ENCODE measurements at regions of chr6 and their contacts with region 1.

Region 1: DNA sequence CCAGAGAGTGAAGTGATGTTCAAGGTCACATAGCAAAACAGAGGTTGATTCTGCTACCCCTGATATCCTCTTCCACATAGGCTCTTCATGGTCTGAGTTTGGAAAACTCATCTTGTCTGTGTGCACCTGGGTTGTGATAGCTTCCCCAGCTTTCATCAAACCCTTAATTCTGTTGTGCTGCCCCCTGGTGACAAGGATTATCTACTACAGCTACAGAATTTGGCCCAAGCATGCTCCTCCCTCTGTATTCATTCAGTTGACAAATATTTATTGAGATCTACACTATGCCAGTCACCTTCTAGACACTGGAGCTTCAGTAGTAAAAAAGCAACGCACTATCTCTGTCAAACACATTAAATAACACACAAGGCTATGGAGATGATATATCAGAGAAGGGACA is 50.4 kb downstream of the SMPDL3A start:
- DNase-seq: peak; percentile 72
- H3K4me3 Mint-ChIP-seq: no peak overlapping the region
- H3K27ac Mint-ChIP-seq: no peak overlapping the region
- H3K4me1 Mint-ChIP-seq: no peaks in the 10 kb centered on the region
- H3K27me3 Mint-ChIP-seq: peaks cover 10% of the 10 kb centered on the region

Region 2: GRCh38 chr6:122491919-122492555 is 347.4 kb before region 1 on chr6:
- CTCF ChIA-PET with region 1: interaction called, 3 read pairs
- intact Hi-C with region 1: loop called (anchors 1 kb)
- DNase-seq: peak; percentile 87
- H3K4me3 Mint-ChIP-seq: no peak overlapping the region
- H3K27ac Mint-ChIP-seq: no peak overlapping the region
- H3K4me1 Mint-ChIP-seq: peaks cover 10% of the 10 kb centered on the region
- H3K27me3 Mint-ChIP-seq: no peaks in the 10 kb centered on the region

Region 3: GRCh38 chr6:122609856-122610689 is 229.4 kb before region 1 on chr6 and contains the start of gene PKIB:
- CTCF ChIA-PET with region 1: no interaction called
- intact Hi-C with region 1: loop called (anchors 1 kb)
- DNase-seq: peak; percentile 67
- H3K4me3 Mint-ChIP-seq: peak within 1 kb of the TSS; percentile 77
- H3K27ac Mint-ChIP-seq: no peak within 1 kb of the TSS
- H3K4me1 Mint-ChIP-seq: peaks cover 14% of the 10 kb centered on the region
- H3K27me3 Mint-ChIP-seq: peaks cover 30% of the 10 kb centered on the region
- total RNA-seq, gene PKIB: 0.67 TPM in 1 of 2 experiments, not detected in the other

Region 4: DNA sequence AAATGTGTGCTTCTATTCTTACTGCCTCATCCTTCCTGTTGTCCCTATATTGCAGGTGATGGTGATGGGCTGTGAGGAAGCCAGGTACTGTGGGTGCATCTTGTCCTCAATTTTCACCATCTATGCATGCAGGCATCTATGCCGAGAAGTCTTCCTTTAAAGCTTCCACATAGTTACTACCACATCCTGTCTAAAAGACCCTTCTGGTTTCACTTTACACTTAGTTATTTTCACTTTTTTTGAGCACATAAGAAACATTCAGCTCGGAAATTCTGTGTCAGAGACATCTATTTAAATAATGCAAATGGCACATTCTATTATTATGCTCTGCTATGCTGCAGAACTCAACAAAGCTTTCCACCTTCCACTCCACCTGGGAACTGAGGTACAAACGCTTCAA is 88.2 kb before region 1 on chr6:
- CTCF ChIA-PET with region 1: interaction called, 21 read pairs
- intact Hi-C with region 1: no loop called
- DNase-seq: peak; percentile 18
- H3K4me3 Mint-ChIP-seq: no peak overlapping the region
- H3K27ac Mint-ChIP-seq: peak overlapping the region; percentile 33
- H3K4me1 Mint-ChIP-seq: peaks cover 37% of the 10 kb centered on the region
- H3K27me3 Mint-ChIP-seq: no peaks in the 10 kb centered on the region

Region 5: DNA sequence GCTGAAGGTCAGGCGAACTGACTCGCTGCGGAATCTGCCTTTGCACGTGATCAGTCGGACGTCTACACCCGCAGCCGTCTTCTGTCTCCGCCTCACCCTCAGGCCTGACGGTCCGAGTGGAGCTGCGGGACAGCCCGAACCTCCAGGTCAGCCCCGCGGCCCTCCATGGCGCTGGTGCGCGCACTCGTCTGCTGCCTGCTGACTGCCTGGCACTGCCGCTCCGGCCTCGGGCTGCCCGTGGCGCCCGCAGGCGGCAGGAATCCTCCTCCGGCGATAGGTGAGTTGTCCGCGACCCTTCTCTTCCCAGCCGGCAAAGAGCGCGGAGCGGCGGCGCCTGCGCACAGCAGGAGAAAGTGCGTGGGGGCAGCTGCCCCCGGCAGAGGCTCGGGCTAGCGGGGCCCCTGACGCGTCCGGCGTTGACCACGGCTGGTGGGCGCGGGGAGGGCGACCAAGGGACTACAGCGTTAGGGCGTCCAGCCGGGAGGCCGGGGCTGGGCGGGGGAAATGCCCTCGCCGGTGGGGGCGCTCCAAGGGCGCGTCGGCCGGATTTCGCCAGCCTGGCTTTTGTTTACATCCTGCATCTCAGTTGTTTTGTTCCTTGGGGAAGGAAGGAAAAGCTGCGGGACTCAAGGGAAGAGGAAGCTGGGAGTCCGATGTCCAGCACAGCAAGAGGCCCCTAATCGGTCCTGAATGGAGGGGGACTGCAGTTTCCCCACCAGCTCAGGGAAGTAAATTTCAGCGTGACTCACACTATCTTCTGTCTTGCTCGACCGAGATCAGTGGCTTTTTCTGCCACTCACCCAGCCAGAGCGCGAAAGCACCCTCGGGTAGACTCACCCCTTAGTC is 50.1 kb before region 1 on chr6 and contains the start of gene SMPDL3A:
- CTCF ChIA-PET with region 1: interaction called, 6 read pairs
- intact Hi-C with region 1: loop called (anchors 2 kb)
- DNase-seq: peak; percentile 54
- H3K4me3 Mint-ChIP-seq: peak within 1 kb of the TSS; percentile 85
- H3K27ac Mint-ChIP-seq: no peak within 1 kb of the TSS
- H3K4me1 Mint-ChIP-seq: peaks cover 14% of the 10 kb centered on the region
- H3K27me3 Mint-ChIP-seq: peaks cover 64% of the 10 kb centered on the region
- total RNA-seq, gene SMPDL3A: 0.31 to 0.49 TPM